Mucosa of descending colon (tissue), 3 donors: ENCODE measurements at regions of chr10 and their contacts with region 1.

Region 1: GRCh38 chr10:93080350-93081046 is 6.8 kb downstream of the CYP26A1 start:
- DNase-seq: peak in 2 of 3 donors; percentile 54 to 60
- ATAC-seq: peak; percentile 82
- H3K4me3 ChIP-seq: no peak overlapping the region
- H3K4me1 ChIP-seq: no peaks in the 10 kb centered on the region
- CTCF ChIP-seq: peak; percentile 57

Region 2: DNA sequence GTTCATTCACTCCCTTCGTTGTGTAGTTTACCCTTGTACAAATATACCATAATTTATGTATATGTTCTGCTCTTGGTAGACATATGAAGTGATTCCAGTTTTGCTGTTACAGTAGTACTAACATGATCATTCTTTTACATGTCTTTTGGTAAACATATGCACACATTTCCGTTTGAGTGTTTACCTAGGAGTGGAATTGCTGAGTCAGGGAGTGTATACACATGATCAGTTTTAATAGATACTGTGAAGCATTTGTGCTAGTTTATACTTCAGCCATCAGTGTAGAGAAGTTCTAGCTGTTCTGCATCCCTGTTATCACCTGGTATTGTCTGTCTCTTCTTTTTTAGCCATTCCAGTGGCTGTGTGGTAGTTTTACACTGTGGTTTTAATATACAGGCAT is 54.4 kb before region 1 on chr10:
- intact Hi-C with region 1: no loop called
- DNase-seq: no peak
- ATAC-seq: peak; percentile 50
- H3K4me3 ChIP-seq: no peak overlapping the region
- H3K4me1 ChIP-seq: no peaks in the 10 kb centered on the region
- CTCF ChIP-seq: no peak

Region 3: DNA sequence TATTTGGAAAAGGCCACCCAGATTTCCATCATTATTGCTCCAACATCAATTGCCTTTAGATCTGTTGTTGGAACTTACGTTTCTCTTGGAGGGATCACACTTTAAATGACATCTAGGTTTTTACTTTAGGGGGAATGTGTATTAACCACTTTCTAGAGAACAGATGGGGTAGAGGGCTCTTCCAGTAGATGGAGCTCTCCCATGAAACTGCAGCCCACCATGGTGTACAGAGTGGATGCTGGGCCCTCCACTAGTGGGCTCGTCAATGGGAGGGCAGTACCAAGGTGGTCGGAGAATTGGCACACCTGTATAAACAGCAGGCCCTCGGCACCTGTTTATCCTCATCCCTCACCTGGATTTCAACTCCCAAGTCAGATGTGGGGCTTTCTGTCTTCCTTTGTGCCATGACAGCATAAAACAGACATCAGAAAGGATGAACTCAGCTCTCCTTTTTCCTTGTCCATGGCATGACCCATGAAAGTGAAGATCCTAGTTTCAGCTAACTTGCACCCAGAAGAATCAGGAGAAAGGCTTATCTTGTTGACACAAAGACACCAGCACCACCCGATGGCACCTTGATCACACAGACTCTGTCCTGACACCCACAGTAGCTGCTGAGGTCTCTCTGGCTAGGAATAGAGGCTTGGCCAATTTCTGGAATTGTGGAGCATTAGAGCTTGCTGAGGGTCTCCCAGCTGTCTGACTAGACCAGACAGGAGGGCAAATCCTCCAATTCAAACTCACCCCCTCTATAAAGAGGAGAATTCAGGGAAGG is 143.7 kb after region 1 on chr10:
- intact Hi-C with region 1: no loop called
- DNase-seq: peak in 1 of 3 donors; percentile 31
- ATAC-seq: peak; percentile 26
- H3K4me3 ChIP-seq: no peak overlapping the region
- H3K4me1 ChIP-seq: no peaks in the 10 kb centered on the region
- CTCF ChIP-seq: no peak

Region 4: DNA sequence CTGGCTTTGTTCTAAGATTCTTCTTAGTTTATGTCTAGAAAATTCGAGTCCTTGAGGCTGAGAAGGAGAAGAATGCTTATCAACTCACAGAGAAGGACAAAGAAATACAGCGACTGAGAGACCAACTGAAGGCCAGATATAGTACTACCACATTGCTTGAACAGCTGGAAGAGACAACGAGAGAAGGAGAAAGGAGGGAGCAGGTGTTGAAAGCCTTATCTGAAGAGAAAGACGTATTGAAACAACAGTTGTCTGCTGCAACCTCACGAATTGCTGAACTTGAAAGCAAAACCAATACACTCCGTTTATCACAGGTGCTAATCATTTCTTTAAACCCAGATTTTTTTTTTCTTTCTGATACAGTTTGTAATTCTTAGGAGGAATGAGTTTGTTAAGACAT is 422.6 kb after region 1 on chr10:
- intact Hi-C with region 1: loop called in 1 of 2 experiments (anchors 10 kb)
- DNase-seq: no peak
- ATAC-seq: peak; percentile 31
- H3K4me3 ChIP-seq: no peak overlapping the region
- H3K4me1 ChIP-seq: no peaks in the 10 kb centered on the region
- CTCF ChIP-seq: no peak